CD14-positive monocyte (primary cell): ENCODE measurements at regions of chr4 and their contacts with region 1.

Region 1: DNA sequence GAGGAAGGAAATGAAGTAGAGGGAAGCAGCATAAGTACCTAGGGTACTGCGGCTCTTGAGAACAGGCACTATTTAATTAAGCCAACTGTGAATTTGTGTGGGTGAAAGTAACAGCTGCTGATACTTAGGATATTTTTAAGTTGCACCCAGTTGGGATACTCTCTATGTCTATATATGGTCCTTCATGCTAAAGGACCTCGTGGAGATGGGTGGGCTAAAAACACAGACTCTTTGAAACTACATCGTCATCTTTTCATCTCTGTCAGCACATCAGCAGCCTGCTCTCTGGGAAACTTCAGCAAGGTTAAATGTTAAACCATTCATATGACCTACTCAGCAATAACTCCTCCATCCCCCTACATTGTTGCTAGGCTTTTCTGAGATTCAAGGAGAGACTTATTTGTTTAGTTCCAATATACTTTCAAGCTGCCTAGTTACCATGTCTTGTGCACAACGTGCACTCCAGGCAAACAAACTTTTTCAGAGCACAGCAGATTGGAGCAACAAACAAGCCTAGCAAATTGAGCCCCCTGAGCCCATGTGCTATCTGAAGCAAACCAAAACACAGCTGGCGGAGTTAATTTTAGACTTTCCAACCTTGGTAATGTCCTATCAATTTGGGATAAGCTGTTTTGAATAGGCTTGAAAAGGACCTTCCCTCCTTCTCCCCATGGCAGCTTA is 6.2 kb upstream of the MOB1B start:
- DNase-seq: no peak
- H3K4me3 ChIP-seq: no peak overlapping the region
- H3K4me3 Mint-ChIP-seq: no peak overlapping the region
- H3K27ac ChIP-seq: no peak overlapping the region
- H3K27ac Mint-ChIP-seq: peak overlapping the region in 1 of 7 donors; percentile 15
- H3K4me1 ChIP-seq: peaks cover 21 to 22% of the 10 kb centered on the region in 2 donors
- H3K4me1 Mint-ChIP-seq: peaks cover 21% of the 10 kb centered on the region
- H3K27me3 ChIP-seq: no peaks in the 10 kb centered on the region
- H3K27me3 Mint-ChIP-seq: peaks cover 0 to 7% (median 0%) of the 10 kb centered on the region in 3 donors
- CTCF ChIP-seq: no peak

Region 2: GRCh38 chr4:70839589-70840093 is 56.3 kb before region 1 on chr4 and contains the start of gene GRSF1:
- intact Hi-C with region 1: loop called in 1 of 2 experiments (anchors 10 kb)
- DNase-seq: peak; percentile 80 to 91 (median 91)
- H3K4me3 ChIP-seq: peak within 1 kb of the TSS; percentile 62 to 79 (median 72)
- H3K4me3 Mint-ChIP-seq: peak within 1 kb of the TSS; percentile 95 to 96
- H3K27ac ChIP-seq: peak within 1 kb of the TSS; percentile 79 to 90
- H3K27ac Mint-ChIP-seq: peak within 1 kb of the TSS; percentile 92 to 97 (median 95)
- H3K4me1 ChIP-seq: peaks cover 20 to 25% of the 10 kb centered on the region in 2 donors
- H3K4me1 Mint-ChIP-seq: peaks cover 24% of the 10 kb centered on the region
- H3K27me3 ChIP-seq: no peaks in the 10 kb centered on the region
- H3K27me3 Mint-ChIP-seq: peaks cover 0 to 3% (median under 1%) of the 10 kb centered on the region in 3 donors
- CTCF ChIP-seq: no peak
- polyA plus RNA-seq, gene GRSF1: 29.1 to 95.9 (median 93.6) TPM

Region 3: DNA sequence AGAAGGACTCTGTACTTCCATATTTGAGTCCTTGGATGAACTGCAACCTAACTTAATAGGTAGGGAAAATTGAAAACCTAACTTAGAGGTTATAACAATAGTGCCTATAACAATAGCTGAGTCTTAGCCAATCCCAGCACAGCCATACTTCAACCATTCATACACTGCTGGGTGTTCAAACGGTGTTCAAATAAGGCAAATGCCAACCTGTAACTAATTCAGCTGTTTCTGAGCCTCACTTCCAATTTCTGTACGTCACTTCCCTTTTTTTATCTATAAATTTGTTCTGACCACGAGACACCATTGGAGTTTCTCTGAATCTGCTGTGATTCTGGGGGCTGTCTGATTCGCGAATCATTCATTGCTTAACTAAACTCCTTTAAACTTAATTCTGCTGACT is 46.7 kb before region 1 on chr4:
- intact Hi-C with region 1: loop called (anchors 5 to 10 kb)
- DNase-seq: peak; percentile 13 to 39 (median 29)
- H3K4me3 ChIP-seq: no peak overlapping the region
- H3K4me3 Mint-ChIP-seq: peak overlapping the region in 1 of 2 donors; percentile 32
- H3K27ac ChIP-seq: peak overlapping the region in 1 of 2 donors; percentile 4
- H3K27ac Mint-ChIP-seq: peak overlapping the region in 4 of 7 donors; percentile 15 to 67 (median 31)
- H3K4me1 ChIP-seq: peaks cover 22 to 38% of the 10 kb centered on the region in 2 donors
- H3K4me1 Mint-ChIP-seq: peaks cover 26% of the 10 kb centered on the region
- H3K27me3 ChIP-seq: no peaks in the 10 kb centered on the region
- H3K27me3 Mint-ChIP-seq: no peaks in the 10 kb centered on the region
- CTCF ChIP-seq: no peak

Region 4: GRCh38 chr4:70943114-70943513 is 47.2 kb after region 1 on chr4:
- intact Hi-C with region 1: loop called in 1 of 2 experiments (anchors 10 kb)
- DNase-seq: peak; percentile 33 to 69 (median 41)
- H3K4me3 ChIP-seq: peak overlapping the region in 2 of 3 experiments; percentile 10 to 12
- H3K4me3 Mint-ChIP-seq: no peak overlapping the region
- H3K27ac ChIP-seq: peak overlapping the region in 1 of 2 donors; percentile 65
- H3K27ac Mint-ChIP-seq: peak overlapping the region in 6 of 7 donors; percentile 31 to 71 (median 62)
- H3K4me1 ChIP-seq: peaks cover 55 to 63% of the 10 kb centered on the region in 2 donors
- H3K4me1 Mint-ChIP-seq: peaks cover 52% of the 10 kb centered on the region
- H3K27me3 ChIP-seq: no peaks in the 10 kb centered on the region
- H3K27me3 Mint-ChIP-seq: no peaks in the 10 kb centered on the region
- CTCF ChIP-seq: no peak